ENCODE measurements at regions of chr2 and their contacts with region 1.

Region 1: DNA sequence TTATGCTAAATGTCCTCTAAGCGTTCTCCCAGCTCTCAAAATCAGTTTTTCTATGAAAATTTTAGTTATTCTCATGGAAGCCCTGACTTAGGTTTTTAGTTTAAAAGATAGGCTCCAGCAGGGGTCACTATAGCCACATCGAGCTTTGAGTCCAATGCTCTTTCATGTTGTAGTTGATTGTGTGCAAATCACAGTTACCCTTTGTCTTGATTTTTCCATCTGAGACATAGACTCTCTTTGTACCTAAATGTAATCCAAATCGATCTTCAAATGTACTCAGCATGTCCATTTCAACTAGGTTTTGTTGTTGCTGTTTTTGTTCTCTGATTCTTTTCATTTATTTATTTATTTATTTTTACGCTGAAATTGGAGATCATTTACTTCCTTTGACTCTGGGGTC is 26.4 kb upstream of the MSTN start:
- DNase-seq: peak; percentile 70
- H3K4me3 Mint-ChIP-seq: no peak overlapping the region
- H3K27ac Mint-ChIP-seq: no peak overlapping the region
- H3K4me1 Mint-ChIP-seq: no peaks in the 10 kb centered on the region
- H3K27me3 Mint-ChIP-seq: no peaks in the 10 kb centered on the region

Region 2: GRCh38 chr2:190180313-190181122 is 91.6 kb after region 1 on chr2:
- CTCF ChIA-PET with region 1: no interaction called
- intact Hi-C with region 1: loop called (anchors 1 kb)
- DNase-seq: peak; percentile 29
- H3K4me3 Mint-ChIP-seq: peak overlapping the region; percentile 42
- H3K27ac Mint-ChIP-seq: no peak overlapping the region
- H3K4me1 Mint-ChIP-seq: peaks cover 7% of the 10 kb centered on the region
- H3K27me3 Mint-ChIP-seq: peaks cover 24% of the 10 kb centered on the region

Region 3: GRCh38 chr2:190313880-190314279 is 225.0 kb after region 1 on chr2:
- CTCF ChIA-PET with region 1: no interaction called
- intact Hi-C with region 1: loop called (anchors 1 kb)
- DNase-seq: no peak
- H3K4me3 Mint-ChIP-seq: no peak overlapping the region
- H3K27ac Mint-ChIP-seq: no peak overlapping the region
- H3K4me1 Mint-ChIP-seq: peaks cover 27% of the 10 kb centered on the region
- H3K27me3 Mint-ChIP-seq: no peaks in the 10 kb centered on the region

Region 4: GRCh38 chr2:190376591-190377245 is 287.8 kb after region 1 on chr2:
- CTCF ChIA-PET with region 1: interaction called, 5 read pairs
- intact Hi-C with region 1: loop called (anchors 1 kb)
- DNase-seq: no peak
- H3K4me3 Mint-ChIP-seq: no peak overlapping the region
- H3K27ac Mint-ChIP-seq: no peak overlapping the region
- H3K4me1 Mint-ChIP-seq: no peaks in the 10 kb centered on the region
- H3K27me3 Mint-ChIP-seq: no peaks in the 10 kb centered on the region

Region 5: GRCh38 chr2:190670182-190670946 is 581.4 kb after region 1 on chr2:
- CTCF ChIA-PET with region 1: no interaction called
- intact Hi-C with region 1: no loop called
- DNase-seq: no peak
- H3K4me3 Mint-ChIP-seq: no peak overlapping the region
- H3K27ac Mint-ChIP-seq: no peak overlapping the region
- H3K4me1 Mint-ChIP-seq: peaks cover 34% of the 10 kb centered on the region
- H3K27me3 Mint-ChIP-seq: no peaks in the 10 kb centered on the region

Region 6: GRCh38 chr2:190809876-190810525 is 721.1 kb after region 1 on chr2:
- CTCF ChIA-PET with region 1: interaction called, 4 read pairs
- intact Hi-C with region 1: loop called (anchors 2 kb)
- DNase-seq: peak; percentile 56
- H3K4me3 Mint-ChIP-seq: no peak overlapping the region
- H3K27ac Mint-ChIP-seq: no peak overlapping the region
- H3K4me1 Mint-ChIP-seq: peaks cover 30% of the 10 kb centered on the region
- H3K27me3 Mint-ChIP-seq: no peaks in the 10 kb centered on the region